WTC11 (cell line): ENCODE measurements at regions of chr10 and their contacts with region 1.

Region 1: GRCh38 chr10:93006435-93007039 is 54.1 kb upstream of the CYP26C1 start:
- DNase-seq: no peak
- ATAC-seq: peak; percentile 78
- H3K4me3 Mint-ChIP-seq: no peak overlapping the region
- H3K27ac Mint-ChIP-seq: no peak overlapping the region
- H3K4me1 Mint-ChIP-seq: no peaks in the 10 kb centered on the region
- H3K27me3 Mint-ChIP-seq: no peaks in the 10 kb centered on the region
- CTCF ChIP-seq: no peak

Region 2: GRCh38 chr10:93039721-93040120 is 33.2 kb after region 1 on chr10:
- CTCF ChIA-PET with region 1: interaction called, 12 read pairs
- POLR2A ChIA-PET with region 1: no interaction called
- DNase-seq: no peak
- ATAC-seq: peak; percentile 96
- H3K4me3 Mint-ChIP-seq: no peak overlapping the region
- H3K27ac Mint-ChIP-seq: peak overlapping the region; percentile 55
- H3K4me1 Mint-ChIP-seq: peaks cover 15% of the 10 kb centered on the region
- H3K27me3 Mint-ChIP-seq: no peaks in the 10 kb centered on the region
- CTCF ChIP-seq: peak; percentile 25; the same call in 1 of the 2 replicates